Astrocyte of the cerebellum (primary cell): ENCODE measurements at regions of chr6 and their contacts with region 1.

Region 1: GRCh38 chr6:151975795-151976194 is 168.3 kb downstream of the ESR1 start:
- DNase-seq: no peak
- H3K4me3 ChIP-seq: no peak overlapping the region
- CTCF ChIP-seq: no peak

Region 2: GRCh38 chr6:151916680-151917164 is 59.1 kb before region 1 on chr6:
- in situ Hi-C with region 1: no loop called
- DNase-seq: peak; percentile 16
- H3K4me3 ChIP-seq: no peak overlapping the region
- CTCF ChIP-seq: no peak

Region 3: GRCh38 chr6:152012227-152012626 is 36.4 kb after region 1 on chr6:
- in situ Hi-C with region 1: loop called (anchors 5 kb)
- DNase-seq: no peak
- H3K4me3 ChIP-seq: no peak overlapping the region
- CTCF ChIP-seq: no peak

Region 4: GRCh38 chr6:152068622-152069261 is 92.9 kb after region 1 on chr6:
- in situ Hi-C with region 1: loop called (anchors 5 kb)
- DNase-seq: no peak
- H3K4me3 ChIP-seq: no peak overlapping the region
- CTCF ChIP-seq: no peak

Region 5: DNA sequence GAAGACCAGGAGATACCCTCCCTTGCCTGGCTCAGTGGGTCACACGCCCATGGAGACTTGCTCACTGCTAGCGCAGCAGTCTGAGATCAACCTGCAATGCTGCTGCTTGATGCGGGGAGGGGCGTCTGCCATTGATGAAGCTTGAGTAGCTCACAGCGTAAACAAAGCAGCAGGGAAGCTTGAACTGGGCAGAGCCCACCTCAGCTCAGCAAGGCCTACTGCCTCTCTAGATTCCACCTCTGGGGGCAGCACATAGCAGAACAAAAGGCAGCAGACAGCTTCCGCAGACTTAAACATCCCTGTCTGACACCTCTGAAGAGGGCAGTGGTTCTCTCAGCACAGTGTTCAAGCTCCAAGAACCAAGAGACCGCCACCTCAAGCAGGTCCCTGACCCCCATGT is 103.0 kb after region 1 on chr6:
- in situ Hi-C with region 1: no loop called
- DNase-seq: no peak
- H3K4me3 ChIP-seq: no peak overlapping the region
- CTCF ChIP-seq: no peak

Region 6: DNA sequence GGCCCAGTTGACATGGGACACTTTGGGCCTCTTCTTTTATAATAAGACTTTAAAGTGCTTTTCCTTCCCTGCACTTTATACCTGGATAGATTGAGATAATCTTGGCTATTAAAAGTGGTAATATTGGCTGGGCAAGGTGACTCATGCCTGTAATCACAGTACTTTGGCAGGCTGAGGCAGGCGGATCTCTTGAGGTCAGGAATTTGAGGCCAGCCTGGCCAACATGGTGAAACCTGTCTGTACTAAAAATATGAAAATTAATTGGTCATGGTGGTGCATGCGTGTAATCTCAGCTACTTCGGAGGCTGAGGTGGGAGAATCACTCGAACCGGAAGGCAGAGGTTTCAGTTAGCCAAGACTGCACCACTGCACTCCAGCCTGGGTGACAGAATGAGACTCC is 1352.4 kb after region 1 on chr6:
- in situ Hi-C with region 1: no loop called
- DNase-seq: peak; percentile 23
- H3K4me3 ChIP-seq: no peak overlapping the region
- CTCF ChIP-seq: no peak